ENCODE measurements at regions of chr1 and their contacts with region 1.

Region 1: GRCh38 chr1:165152727-165153126 is 203.8 kb downstream of the LMX1A start:
- DNase-seq: peak in 1 of 2 donors; percentile 64
- ATAC-seq: peak; percentile 79 to 99 (median 97)
- H3K4me3 ChIP-seq: no peak overlapping the region
- H3K27ac ChIP-seq: no peak overlapping the region
- H3K4me1 ChIP-seq: peaks cover 19% of the 10 kb centered on the region
- H3K27me3 ChIP-seq: peaks cover 2 to 3% (median 2%) of the 10 kb centered on the region in 3 donors
- CTCF ChIP-seq: peak; percentile 43

Region 2: DNA sequence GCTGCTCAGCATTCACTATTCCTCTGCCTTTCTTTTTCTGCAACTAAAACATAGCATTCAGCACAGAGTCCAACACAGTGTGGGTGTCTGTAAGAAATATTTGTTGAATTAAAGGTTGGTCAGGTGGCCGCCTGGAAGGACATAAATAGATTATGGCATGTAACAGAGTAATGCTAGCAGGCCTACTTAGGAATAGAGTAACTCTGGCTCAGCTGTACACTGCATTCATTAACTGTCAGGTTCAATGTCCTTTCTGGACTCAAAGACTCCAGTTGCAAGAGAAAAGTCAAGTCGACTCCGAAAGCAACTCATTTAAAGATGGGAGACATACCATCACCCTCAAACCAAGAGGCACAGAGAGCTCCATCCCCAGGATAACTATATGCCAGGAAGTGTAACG is 87.8 kb after region 1 on chr1:
- intact Hi-C with region 1: loop called in 1 of 2 experiments (anchors 5 kb)
- DNase-seq: no peak
- ATAC-seq: peak; percentile 79 to 94 (median 92)
- H3K4me3 ChIP-seq: peak overlapping the region; percentile 30
- H3K27ac ChIP-seq: peak overlapping the region; percentile 83
- H3K4me1 ChIP-seq: peaks cover 29% of the 10 kb centered on the region
- H3K27me3 ChIP-seq: no peaks in the 10 kb centered on the region
- CTCF ChIP-seq: no peak

Region 3: GRCh38 chr1:165290148-165290547 is 137.4 kb after region 1 on chr1:
- intact Hi-C with region 1: loop called in 1 of 2 experiments (anchors 5 kb)
- DNase-seq: no peak
- ATAC-seq: peak; percentile 28 to 83 (median 66)
- H3K4me3 ChIP-seq: no peak overlapping the region
- H3K27ac ChIP-seq: no peak overlapping the region
- H3K4me1 ChIP-seq: no peaks in the 10 kb centered on the region
- H3K27me3 ChIP-seq: peaks cover 0 to 10% (median 1%) of the 10 kb centered on the region in 3 donors
- CTCF ChIP-seq: peak; percentile 29

Measured in psoas muscle (tissue), 8 donors.